Left ventricle myocardium inferior (tissue), 1 donor: ENCODE measurements at regions of chr2 and their contacts with region 1.

Region 1: GRCh38 chr2:25991965-25992364 is 9.7 kb upstream of the KIF3C start:
- DNase-seq: no peak
- H3K4me3 ChIP-seq: peak overlapping the region; percentile 49
- H3K27ac ChIP-seq: no peak overlapping the region
- H3K4me1 ChIP-seq: peaks cover 8% of the 10 kb centered on the region
- H3K27me3 ChIP-seq: no peaks in the 10 kb centered on the region
- CTCF ChIP-seq: no peak

Region 2: DNA sequence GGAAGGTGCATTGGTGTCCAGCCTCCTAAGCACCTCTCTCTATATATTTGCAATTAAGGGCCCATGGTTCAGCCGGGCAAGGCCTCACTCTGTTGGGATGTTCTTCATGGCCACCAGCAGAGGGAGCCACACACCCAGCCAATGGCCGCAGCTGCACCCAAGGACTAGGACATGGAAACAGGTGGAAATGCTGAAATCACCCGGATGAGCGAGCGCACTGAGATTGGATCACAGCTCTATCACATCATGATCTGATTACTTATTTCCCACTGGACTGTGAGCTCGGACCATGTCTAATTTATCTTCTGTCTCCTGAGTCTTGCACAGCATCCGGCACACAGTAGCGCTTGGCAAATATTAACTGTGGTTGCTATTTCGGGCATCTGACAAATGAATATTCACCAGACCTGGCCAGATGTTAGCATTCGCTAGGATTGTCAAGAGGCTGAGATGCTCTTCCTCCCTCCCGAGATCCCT is 40.9 kb before region 1 on chr2:
- intact Hi-C with region 1: loop called (anchors 5 kb)
- DNase-seq: peak; percentile 71
- H3K4me3 ChIP-seq: peak overlapping the region; percentile 52
- H3K27ac ChIP-seq: no peak overlapping the region
- H3K4me1 ChIP-seq: peaks cover 16% of the 10 kb centered on the region
- H3K27me3 ChIP-seq: no peaks in the 10 kb centered on the region
- CTCF ChIP-seq: peak; percentile 92

Region 3: DNA sequence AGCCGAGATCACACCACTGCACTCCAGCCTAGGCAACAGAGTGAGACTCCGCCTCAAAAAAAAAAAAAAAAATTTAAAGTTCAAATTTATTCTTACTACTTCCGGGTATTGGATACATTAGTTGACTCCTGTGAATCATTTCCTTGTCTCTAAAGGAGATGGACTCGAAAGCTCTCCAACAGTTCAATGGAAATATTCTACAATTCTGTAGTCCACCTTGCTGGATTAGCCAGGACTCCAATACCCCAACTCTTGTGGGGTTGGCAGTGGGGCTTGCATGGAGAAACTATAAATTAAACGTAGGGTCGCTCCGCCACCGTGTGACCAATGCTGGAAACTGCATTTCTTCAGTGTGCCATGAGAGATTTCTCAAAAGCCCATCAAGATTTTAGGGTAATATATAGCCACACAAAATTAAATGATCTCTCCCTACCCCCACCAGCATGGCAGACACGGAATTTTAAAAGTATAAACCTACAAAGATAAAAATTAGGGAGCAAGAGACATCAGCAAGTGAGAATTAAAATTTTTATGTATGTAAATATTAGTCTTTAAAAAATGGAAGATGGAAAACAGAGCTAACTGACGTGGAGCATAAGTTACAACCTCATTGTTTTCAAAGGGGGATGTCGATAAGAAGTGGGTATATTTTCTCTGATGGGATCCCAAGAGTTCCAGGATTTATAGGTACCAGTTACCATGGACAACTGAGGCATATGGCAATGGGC is 153.2 kb after region 1 on chr2:
- intact Hi-C with region 1: loop called (anchors 5 kb)
- DNase-seq: peak; percentile 37
- H3K4me3 ChIP-seq: no peak overlapping the region
- H3K27ac ChIP-seq: no peak overlapping the region
- H3K4me1 ChIP-seq: peaks cover 5% of the 10 kb centered on the region
- H3K27me3 ChIP-seq: no peaks in the 10 kb centered on the region
- CTCF ChIP-seq: peak; percentile 82